ENCODE measurements at regions of chr2 and their contacts with region 1.

Region 1: GRCh38 chr2:177419274-177419673 is 26.7 kb downstream of the AGPS start:
- DNase-seq: no peak
- ATAC-seq: no peak
- H3K4me3 ChIP-seq: no peak overlapping the region
- H3K27ac ChIP-seq: no peak overlapping the region
- H3K4me1 ChIP-seq: peaks cover 0 to 9% of the 10 kb centered on the region in 2 experiments; a peak in 2 of 4 replicates
- H3K27me3 ChIP-seq: no peaks in the 10 kb centered on the region
- CTCF ChIP-seq: no peak
- POLR2A ChIP-seq: no peak
- RAD21 ChIP-seq: no peak

Region 2: DNA sequence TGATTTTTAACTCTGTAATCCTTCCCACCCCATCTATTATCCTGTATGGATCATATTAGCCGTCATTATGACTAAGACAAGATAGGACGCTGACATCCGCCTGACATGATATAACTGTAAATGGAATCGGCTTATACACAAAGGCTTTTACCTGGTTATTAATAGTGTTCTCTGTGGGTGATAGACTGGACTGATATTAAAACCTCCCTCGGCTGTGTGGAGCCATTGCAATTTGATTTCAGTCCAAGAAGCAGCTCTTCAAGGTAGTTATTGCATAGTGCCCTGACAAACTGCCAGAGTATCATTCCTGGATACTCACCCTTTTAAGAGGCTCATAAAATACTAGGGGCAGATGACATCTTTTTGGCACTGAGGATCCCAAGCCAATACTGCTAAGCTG is 432.8 kb before region 1 on chr2:
- CTCF ChIA-PET with region 1: no interaction called
- POLR2A ChIA-PET with region 1: no interaction called
- RAD21 ChIA-PET with region 1: no interaction called
- intact Hi-C with region 1: no loop called
- DNase-seq: no peak
- ATAC-seq: no peak
- H3K4me3 ChIP-seq: no peak overlapping the region
- H3K27ac ChIP-seq: no peak overlapping the region
- H3K4me1 ChIP-seq: no peaks in the 10 kb centered on the region
- H3K27me3 ChIP-seq: peaks cover 43% of the 10 kb centered on the region
- CTCF ChIP-seq: no peak
- POLR2A ChIP-seq: no peak
- RAD21 ChIP-seq: no peak

Region 3: GRCh38 chr2:177724398-177725287 is 305.4 kb after region 1 on chr2:
- CTCF ChIA-PET with region 1: no interaction called
- POLR2A ChIA-PET with region 1: no interaction called
- RAD21 ChIA-PET with region 1: no interaction called
- intact Hi-C with region 1: loop called (anchors 10 kb)
- DNase-seq: peak; percentile 27
- ATAC-seq: peak; percentile 95
- H3K4me3 ChIP-seq: no peak overlapping the region
- H3K27ac ChIP-seq: no peak overlapping the region
- H3K4me1 ChIP-seq: no peaks in the 10 kb centered on the region
- H3K27me3 ChIP-seq: no peaks in the 10 kb centered on the region
- CTCF ChIP-seq: peak; percentile 79 to 97 (median 93); a peak in 5 of 6 replicates
- POLR2A ChIP-seq: no peak
- RAD21 ChIP-seq: peak; percentile 86

Measured in HCT116 (cell line).